ENCODE measurements at regions of chr1 and their contacts with region 1.

Region 1: DNA sequence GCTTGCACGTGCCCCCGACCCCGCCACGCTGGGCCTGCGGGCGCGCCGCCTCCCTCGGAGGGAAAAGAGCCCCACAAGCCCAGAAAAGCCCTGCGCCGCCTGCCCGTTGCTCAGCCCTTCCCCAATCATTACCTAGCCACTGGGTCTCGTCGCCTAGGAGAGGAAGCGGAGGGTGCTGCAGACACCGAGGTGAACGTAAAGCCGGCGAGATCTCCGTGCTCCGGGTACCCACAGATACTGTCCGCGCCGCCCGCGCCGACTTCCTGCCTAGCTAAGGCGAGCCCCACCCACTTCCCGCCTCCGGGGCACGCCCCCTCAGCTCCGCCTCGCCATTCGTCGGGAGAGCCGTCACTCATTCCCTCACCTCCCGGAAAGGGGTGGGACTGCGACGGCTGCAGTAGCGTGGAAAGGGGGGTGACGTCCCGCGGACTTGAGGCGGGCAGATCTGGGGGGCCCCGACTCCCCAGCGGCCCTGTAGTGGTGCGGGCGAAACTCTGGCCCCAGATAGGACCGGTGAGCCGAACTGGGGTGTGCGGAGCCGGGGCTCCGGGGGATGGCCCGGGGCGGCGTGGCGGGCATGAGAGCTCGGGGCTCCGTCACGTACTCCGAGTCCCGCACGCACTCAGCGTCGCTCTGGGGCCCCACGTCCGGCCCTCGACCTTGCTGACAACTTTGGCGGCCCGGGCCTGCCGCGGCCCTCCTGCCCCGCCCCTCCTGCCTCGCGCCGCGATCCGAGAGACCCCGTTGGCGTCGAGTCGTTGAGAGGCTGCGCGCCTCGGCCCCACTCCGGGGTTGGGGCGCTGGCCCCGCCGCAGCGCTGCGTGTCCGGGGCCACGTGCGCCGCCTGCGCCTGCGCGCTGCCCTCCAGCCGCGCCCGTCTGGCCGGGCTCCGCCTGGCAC is at the start of gene ENO1:
- DNase-seq: peak; percentile 97
- H3K4me3 ChIP-seq: peak within 1 kb of the TSS; percentile 99
- H3K27ac ChIP-seq: peak within 1 kb of the TSS; percentile 77
- H3K4me1 ChIP-seq: peaks cover 41% of the 10 kb centered on the region
- CTCF ChIP-seq: no peak
- total RNA-seq, gene ENO1: 1,017 and 1,033 TPM in 2 replicates

Region 2: DNA sequence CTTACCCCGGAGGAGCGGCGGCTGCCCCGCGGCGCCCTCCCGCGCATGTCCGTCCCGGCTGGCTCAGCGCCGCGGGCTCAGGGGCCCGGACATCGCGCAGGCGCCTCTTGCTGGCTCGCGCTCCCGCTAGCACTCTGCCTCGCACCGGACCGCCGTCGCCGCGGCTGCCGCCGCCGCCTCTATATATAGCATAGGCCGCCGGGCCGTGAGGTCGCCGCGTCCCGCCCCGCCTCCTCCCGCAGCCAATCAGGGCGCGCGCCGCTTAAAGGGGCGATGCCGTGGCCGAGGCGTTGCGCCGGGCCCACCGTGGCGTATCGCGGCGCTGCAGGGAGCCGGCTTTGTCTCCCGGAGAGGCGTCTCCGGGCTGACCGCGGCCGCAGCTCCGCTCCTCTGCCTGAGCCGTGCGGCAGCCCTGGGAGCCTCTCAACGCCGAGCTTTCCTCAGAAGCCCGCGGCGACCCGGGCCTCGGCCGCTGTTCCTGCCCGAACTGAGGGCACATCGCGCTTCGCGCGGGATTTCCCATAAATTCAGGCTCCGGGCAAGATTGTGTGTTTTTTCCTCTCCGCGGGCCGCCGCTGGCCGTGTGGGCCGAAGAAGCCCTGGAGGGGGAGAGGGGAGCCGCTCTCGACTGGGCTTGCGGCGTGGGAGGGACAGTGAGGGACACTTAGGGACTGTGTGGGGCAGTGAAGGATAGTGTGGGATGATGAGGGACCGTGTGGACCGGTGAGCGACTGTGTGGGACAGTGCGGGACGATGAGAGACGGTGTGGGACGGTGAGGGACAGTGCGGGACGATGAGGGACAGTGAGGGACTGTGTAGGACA is 852.3 kb before region 1 on chr1 and contains the start of gene ERRFI1:
- CTCF ChIA-PET with region 1: no interaction called
- POLR2A ChIA-PET with region 1: no interaction called
- intact Hi-C with region 1: no loop called
- DNase-seq: no peak
- H3K4me3 ChIP-seq: no peak within 1 kb of the TSS
- H3K27ac ChIP-seq: no peak within 1 kb of the TSS
- H3K4me1 ChIP-seq: no peaks in the 10 kb centered on the region
- CTCF ChIP-seq: no peak
- total RNA-seq, gene ERRFI1: not detected in 2 replicates

Region 3: GRCh38 chr1:8817406-8818324 is 61.0 kb before region 1 on chr1 and contains the start of gene RERE:
- CTCF ChIA-PET with region 1: no interaction called
- POLR2A ChIA-PET with region 1: no interaction called
- intact Hi-C with region 1: loop called (anchors 2 kb)
- DNase-seq: peak; percentile 96
- H3K4me3 ChIP-seq: peak within 1 kb of the TSS; percentile 89
- H3K27ac ChIP-seq: peak within 1 kb of the TSS; percentile 86
- H3K4me1 ChIP-seq: peaks cover 43% of the 10 kb centered on the region
- CTCF ChIP-seq: 0 out of 2 replicates have a peak, but pooled peaks have one; percentile 15
- total RNA-seq, gene RERE: 73.1 and 81.5 TPM in 2 replicates

Region 4: DNA sequence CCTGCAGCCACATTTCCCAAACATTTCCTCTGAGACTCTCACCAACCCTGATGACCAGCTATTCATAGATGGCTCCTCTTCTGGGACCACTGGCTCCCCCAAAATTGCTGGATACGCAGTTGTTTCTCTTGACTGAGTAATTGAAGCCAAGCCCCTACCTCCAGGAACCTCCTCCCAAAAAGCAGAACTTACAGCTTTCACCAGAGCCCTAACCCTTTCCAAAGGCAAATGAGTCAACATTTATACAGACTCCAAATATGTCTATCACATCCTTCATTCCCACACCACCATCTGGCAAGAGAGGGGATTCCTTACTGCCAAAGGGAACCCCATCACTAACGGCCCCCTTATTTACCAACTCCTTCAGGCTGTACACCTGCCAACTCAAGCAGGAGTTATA is 46.7 kb after region 1 on chr1:
- CTCF ChIA-PET with region 1: no interaction called
- POLR2A ChIA-PET with region 1: no interaction called
- intact Hi-C with region 1: no loop called
- DNase-seq: no peak
- H3K4me3 ChIP-seq: no peak overlapping the region
- H3K27ac ChIP-seq: no peak overlapping the region
- H3K4me1 ChIP-seq: no peaks in the 10 kb centered on the region
- CTCF ChIP-seq: no peak

Region 5: GRCh38 chr1:9069326-9070100 is 190.8 kb after region 1 on chr1 and contains the start of gene SLC2A5:
- CTCF ChIA-PET with region 1: no interaction called
- POLR2A ChIA-PET with region 1: no interaction called
- intact Hi-C with region 1: loop called (anchors 5 kb)
- DNase-seq: peak; percentile 97
- H3K4me3 ChIP-seq: peak within 1 kb of the TSS; percentile 83
- H3K27ac ChIP-seq: peak within 1 kb of the TSS; percentile 92
- H3K4me1 ChIP-seq: peaks cover 64% of the 10 kb centered on the region
- CTCF ChIP-seq: peak; percentile 24; the same call in 1 of the 2 replicates
- total RNA-seq, gene SLC2A5: 109 and 112 TPM in 2 replicates

Measured in OCI-LY7 (cell line).